ENCODE measurements at regions of chr1 and their contacts with region 1.

Region 1: DNA sequence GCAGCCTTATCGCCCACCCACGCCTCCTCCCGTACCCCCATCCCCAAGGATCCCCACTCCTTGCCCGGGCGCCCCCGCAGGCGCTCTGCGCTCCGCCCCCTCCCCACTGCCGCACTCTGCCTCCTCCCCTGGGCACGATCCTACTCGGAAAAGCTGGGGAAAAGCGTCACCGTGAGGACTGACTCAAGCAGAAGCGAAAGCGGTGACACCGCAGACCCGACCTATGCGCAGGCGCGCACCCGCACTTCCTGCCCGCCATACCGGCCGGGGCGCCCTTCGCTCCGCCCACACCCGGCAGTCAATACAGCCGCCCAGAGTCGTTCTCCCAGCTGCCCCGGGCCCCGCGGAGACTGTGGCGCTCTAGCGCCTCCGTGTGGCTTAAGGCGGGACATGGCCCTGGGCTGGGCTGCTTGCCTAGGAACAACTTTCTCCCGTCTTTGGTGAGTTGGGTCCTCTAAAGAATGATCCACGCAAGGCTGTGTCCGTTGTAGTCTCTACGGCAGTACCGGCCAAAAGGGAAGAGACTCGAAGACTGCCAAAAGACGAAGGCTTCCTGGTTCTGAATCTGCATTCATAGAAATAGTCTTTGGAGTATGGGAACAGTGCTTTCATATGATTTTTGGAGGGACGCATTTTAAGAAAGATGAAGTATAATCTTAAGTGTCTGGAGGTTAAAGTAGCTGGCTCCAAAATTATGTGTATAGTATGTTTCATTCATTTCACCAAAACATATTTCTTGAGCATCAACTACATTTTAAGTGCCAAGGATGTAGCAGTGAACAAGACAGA is at the start of gene OMA1:
- DNase-seq: peak; percentile 92
- H3K4me3 ChIP-seq: peak within 1 kb of the TSS; percentile 74 to 84 (median 75)
- H3K27ac ChIP-seq: peak within 1 kb of the TSS; percentile 92
- H3K4me1 ChIP-seq: peaks cover 7% of the 10 kb centered on the region
- H3K27me3 ChIP-seq: no peaks in the 10 kb centered on the region
- CTCF ChIP-seq: peak; percentile 79 to 98
- total RNA-seq, gene OMA1: 14.8 to 20.3 TPM

Region 2: GRCh38 chr1:57831624-57832023 is 715.1 kb before region 1 on chr1:
- CTCF ChIA-PET with region 1: no interaction called
- dilution Hi-C with region 1: no loop called
- in situ Hi-C with region 1: no loop called
- intact Hi-C with region 1: loop called (anchors 5 kb)
- DNase-seq: peak; percentile 89
- H3K4me3 ChIP-seq: no peak overlapping the region
- H3K27ac ChIP-seq: no peak overlapping the region
- H3K4me1 ChIP-seq: peaks cover 40% of the 10 kb centered on the region
- H3K27me3 ChIP-seq: no peaks in the 10 kb centered on the region
- CTCF ChIP-seq: no peak

Region 3: DNA sequence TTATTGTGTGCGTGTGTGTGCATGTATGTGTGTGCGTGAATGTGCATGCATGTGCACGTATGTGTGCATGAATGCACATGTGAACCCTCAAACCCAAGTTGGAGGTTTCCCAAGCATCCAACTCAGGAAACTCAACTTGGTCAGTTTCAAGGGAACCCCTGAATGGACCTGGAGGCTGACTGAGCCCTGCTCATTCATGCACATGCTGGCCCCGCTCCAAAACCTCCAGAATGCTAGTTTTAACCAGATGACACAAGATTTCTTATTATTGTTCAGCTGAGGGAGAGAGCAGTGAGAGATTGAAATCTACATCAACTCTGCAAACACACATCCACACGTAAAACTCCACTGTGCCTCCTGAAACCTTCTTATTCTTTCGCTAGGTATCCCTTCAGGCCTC is 104.6 kb before region 1 on chr1:
- CTCF ChIA-PET with region 1: no interaction called
- dilution Hi-C with region 1: no loop called
- in situ Hi-C with region 1: no loop called
- intact Hi-C with region 1: no loop called
- DNase-seq: no peak
- H3K4me3 ChIP-seq: no peak overlapping the region
- H3K27ac ChIP-seq: no peak overlapping the region
- H3K4me1 ChIP-seq: no peaks in the 10 kb centered on the region
- H3K27me3 ChIP-seq: no peaks in the 10 kb centered on the region
- CTCF ChIP-seq: no peak

Region 4: GRCh38 chr1:58515794-58516401 is 30.8 kb before region 1 on chr1:
- CTCF ChIA-PET with region 1: no interaction called
- dilution Hi-C with region 1: no loop called
- in situ Hi-C with region 1: no loop called
- intact Hi-C with region 1: loop called (anchors 1 kb)
- DNase-seq: peak; percentile 51
- H3K4me3 ChIP-seq: no peak overlapping the region
- H3K27ac ChIP-seq: no peak overlapping the region
- H3K4me1 ChIP-seq: no peaks in the 10 kb centered on the region
- H3K27me3 ChIP-seq: no peaks in the 10 kb centered on the region
- CTCF ChIP-seq: peak; percentile 46 to 60

Region 5: DNA sequence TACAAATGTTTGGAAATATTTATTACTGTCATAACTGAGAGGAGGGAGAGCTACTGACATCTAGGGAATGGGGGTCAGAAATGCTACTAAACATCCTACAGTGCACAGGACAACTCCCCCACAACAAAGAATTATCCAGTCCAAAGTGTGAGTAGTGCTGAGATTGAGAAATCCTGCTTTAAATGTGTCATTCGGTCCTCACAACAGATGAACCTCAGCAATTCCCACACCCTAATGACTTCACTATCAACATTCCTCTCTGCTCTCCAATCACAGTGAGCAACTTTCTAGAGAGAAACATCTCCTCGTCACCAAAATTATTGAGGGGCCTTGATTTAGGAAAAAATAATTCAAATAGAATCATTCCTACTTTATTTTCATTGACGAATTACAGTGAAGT is 18.2 kb before region 1 on chr1:
- CTCF ChIA-PET with region 1: no interaction called
- dilution Hi-C with region 1: no loop called
- in situ Hi-C with region 1: no loop called
- intact Hi-C with region 1: loop called (anchors 1 kb)
- DNase-seq: peak; percentile 67
- H3K4me3 ChIP-seq: no peak overlapping the region
- H3K27ac ChIP-seq: peak overlapping the region; percentile 11
- H3K4me1 ChIP-seq: peaks cover 5% of the 10 kb centered on the region
- H3K27me3 ChIP-seq: no peaks in the 10 kb centered on the region
- CTCF ChIP-seq: no peak

Region 6: GRCh38 chr1:58576727-58577653 is 30.3 kb after region 1 on chr1 and contains the start of gene TACSTD2:
- CTCF ChIA-PET with region 1: no interaction called
- dilution Hi-C with region 1: no loop called
- in situ Hi-C with region 1: no loop called
- intact Hi-C with region 1: loop called (anchors 1 kb)
- DNase-seq: peak; percentile 99
- H3K4me3 ChIP-seq: peak within 1 kb of the TSS; percentile 65 to 93 (median 82)
- H3K27ac ChIP-seq: peak within 1 kb of the TSS; percentile 99
- H3K4me1 ChIP-seq: peaks cover 46% of the 10 kb centered on the region
- H3K27me3 ChIP-seq: no peaks in the 10 kb centered on the region
- CTCF ChIP-seq: no peak
- total RNA-seq, gene TACSTD2: 231 to 244 TPM

Region 7: GRCh38 chr1:58592529-58593134 is 45.9 kb after region 1 on chr1:
- CTCF ChIA-PET with region 1: no interaction called
- dilution Hi-C with region 1: no loop called
- in situ Hi-C with region 1: no loop called
- intact Hi-C with region 1: loop called (anchors 5 kb)
- DNase-seq: peak; percentile 94
- H3K4me3 ChIP-seq: no peak overlapping the region
- H3K27ac ChIP-seq: peak overlapping the region; percentile 61
- H3K4me1 ChIP-seq: peaks cover 27% of the 10 kb centered on the region
- H3K27me3 ChIP-seq: no peaks in the 10 kb centered on the region
- CTCF ChIP-seq: no peak

Region 8: DNA sequence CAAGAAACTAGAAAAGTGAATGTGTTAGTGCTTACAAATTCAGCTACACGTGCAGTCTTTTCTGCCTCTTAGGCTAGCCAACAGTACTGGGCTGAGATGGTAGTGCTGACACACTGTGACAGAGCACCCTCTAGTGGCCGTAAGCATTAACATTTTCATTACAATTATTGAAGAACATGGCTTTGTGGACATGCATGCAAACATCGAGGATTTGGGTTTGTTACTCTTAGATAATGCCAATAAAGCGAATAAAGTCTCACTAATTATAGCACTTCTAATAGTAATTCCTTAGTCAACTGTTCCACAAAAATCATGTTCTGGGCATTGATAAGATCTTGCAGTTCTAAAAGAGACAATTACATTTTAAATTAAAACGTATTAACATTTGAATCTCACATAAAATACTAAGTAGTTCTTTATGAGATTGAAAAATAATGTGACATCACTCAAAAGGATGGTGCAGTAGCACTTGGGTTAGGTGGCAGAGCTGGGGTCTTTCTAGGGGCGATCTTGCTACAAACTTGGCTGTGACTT is 106.0 kb after region 1 on chr1:
- CTCF ChIA-PET with region 1: interaction called, 19 read pairs
- dilution Hi-C with region 1: no loop called
- in situ Hi-C with region 1: loop called in 1 of 2 experiments (anchors 10 kb)
- intact Hi-C with region 1: loop called (anchors 1 kb)
- DNase-seq: peak; percentile 75
- H3K4me3 ChIP-seq: no peak overlapping the region
- H3K27ac ChIP-seq: no peak overlapping the region
- H3K4me1 ChIP-seq: peaks cover 3% of the 10 kb centered on the region
- H3K27me3 ChIP-seq: no peaks in the 10 kb centered on the region
- CTCF ChIP-seq: peak; percentile 76 to 81

Measured in mammary epithelial cell (primary cell).